ENCODE measurements at regions of chr13 and their contacts with region 1.

Region 1: GRCh38 chr13:43303033-43303729 is 279.8 kb downstream of the DNAJC15 start:
- DNase-seq: peak; percentile 41 to 82
- ATAC-seq: peak; percentile 86 to 95 (median 91)
- H3K4me3 ChIP-seq: no peak overlapping the region
- H3K27ac ChIP-seq: peak overlapping the region; percentile 30
- H3K4me1 ChIP-seq: peaks cover 24% of the 10 kb centered on the region
- H3K27me3 ChIP-seq: no peaks in the 10 kb centered on the region
- CTCF ChIP-seq: peak; percentile 69

Region 2: GRCh38 chr13:43786773-43787517 is 483.8 kb after region 1 on chr13 and contains the start of gene ENOX1:
- intact Hi-C with region 1: loop called in 1 of 2 experiments (anchors 5 kb)
- DNase-seq: peak; percentile 62 to 80
- ATAC-seq: peak; percentile 71 to 83 (median 75)
- H3K4me3 ChIP-seq: peak within 1 kb of the TSS; percentile 78
- H3K27ac ChIP-seq: peak within 1 kb of the TSS; percentile 70
- H3K4me1 ChIP-seq: peaks cover 8% of the 10 kb centered on the region
- H3K27me3 ChIP-seq: no peaks in the 10 kb centered on the region
- CTCF ChIP-seq: peak; percentile 24
- total RNA-seq, gene ENOX1: 0.34 to 7.1 (median 2.1) TPM

Measured in psoas muscle (tissue), 8 donors.